Endothelial cell of umbilical vein (primary cell): ENCODE measurements at regions of chr2 and their contacts with region 1.

Region 1: GRCh38 chr2:24058564-24059271 is 9.2 kb downstream of the FKBP1B start:
- DNase-seq: no peak
- H3K4me3 ChIP-seq: no peak overlapping the region
- H3K27ac ChIP-seq: no peak overlapping the region
- H3K4me1 ChIP-seq: no peaks in the 10 kb centered on the region
- H3K27me3 ChIP-seq: no peaks in the 10 kb centered on the region
- CTCF ChIP-seq: no peak
- POLR2A ChIP-seq: no peak

Region 2: GRCh38 chr2:23988371-23988770 is 70.3 kb before region 1 on chr2:
- CTCF ChIA-PET with region 1: interaction called, 3 read pairs
- POLR2A ChIA-PET with region 1: no interaction called
- dilution Hi-C with region 1: no loop called
- intact Hi-C with region 1: loop called (anchors 1 kb)
- DNase-seq: peak; percentile 35
- H3K4me3 ChIP-seq: no peak overlapping the region
- H3K27ac ChIP-seq: no peak overlapping the region
- H3K4me1 ChIP-seq: no peaks in the 10 kb centered on the region
- H3K27me3 ChIP-seq: no peaks in the 10 kb centered on the region
- CTCF ChIP-seq: peak; percentile 10 to 13
- POLR2A ChIP-seq: no peak

Region 3: DNA sequence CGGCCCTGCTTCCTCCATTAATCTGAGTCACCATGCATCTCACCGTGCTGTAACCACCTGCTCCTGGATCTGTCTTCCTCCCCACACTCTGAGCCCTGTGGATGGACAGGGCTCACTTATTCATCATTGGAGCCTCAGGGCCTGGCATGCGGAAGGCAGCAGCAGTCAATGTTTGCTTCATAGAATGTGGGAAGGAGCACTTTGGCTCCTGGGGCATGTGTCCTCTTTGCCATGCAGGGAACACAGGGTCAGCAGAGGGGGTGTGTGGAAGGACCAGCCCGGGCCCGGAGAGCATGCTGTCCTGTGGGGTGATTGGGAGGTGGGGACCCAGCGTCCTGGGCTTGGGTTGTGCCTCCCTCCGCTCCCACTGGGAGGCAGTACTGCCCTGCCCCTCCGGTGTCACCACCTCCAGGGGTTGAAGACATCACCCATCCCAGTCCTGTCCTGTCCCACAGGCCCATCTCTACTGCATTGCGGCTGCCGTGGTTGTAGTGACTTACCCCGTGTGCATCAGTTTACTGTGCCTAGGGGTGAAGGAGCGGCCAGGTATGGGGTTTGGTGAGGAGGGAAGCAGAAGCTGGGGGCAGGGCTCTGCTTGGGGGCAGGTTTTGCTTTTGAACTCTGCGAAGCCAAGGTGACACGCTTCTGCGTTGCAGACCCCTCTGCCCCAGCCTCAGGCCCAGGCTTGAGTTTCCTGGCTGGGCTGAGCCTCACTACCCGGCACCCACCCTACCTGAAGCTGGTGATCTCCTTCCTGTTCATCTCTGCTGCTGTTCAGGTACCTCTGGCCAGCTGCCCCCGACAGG is 37.3 kb before region 1 on chr2:
- CTCF ChIA-PET with region 1: no interaction called
- POLR2A ChIA-PET with region 1: no interaction called
- dilution Hi-C with region 1: no loop called
- intact Hi-C with region 1: loop called (anchors 1 kb)
- DNase-seq: no peak
- H3K4me3 ChIP-seq: no peak overlapping the region
- H3K27ac ChIP-seq: no peak overlapping the region
- H3K4me1 ChIP-seq: peaks cover 4% of the 10 kb centered on the region
- H3K27me3 ChIP-seq: no peaks in the 10 kb centered on the region
- CTCF ChIP-seq: peak; percentile 13 to 35
- POLR2A ChIP-seq: no peak